ENCODE measurements at regions of chr1 and their contacts with region 1.

Region 1: GRCh38 chr1:19630720-19631395 is 13.3 kb upstream of the NBL1 start:
- DNase-seq: no peak
- ATAC-seq: no peak
- H3K4me3 ChIP-seq: no peak overlapping the region
- H3K27ac ChIP-seq: no peak overlapping the region
- H3K4me1 ChIP-seq: no peaks in the 10 kb centered on the region
- H3K27me3 ChIP-seq: no peaks in the 10 kb centered on the region
- CTCF ChIP-seq: no peak
- POLR2A ChIP-seq: no peak
- RAD21 ChIP-seq: no peak

Region 2: GRCh38 chr1:19110257-19110927 is 520.5 kb before region 1 on chr1:
- CTCF ChIA-PET with region 1: no interaction called
- POLR2A ChIA-PET with region 1: no interaction called
- dilution Hi-C with region 1: no loop called
- in situ Hi-C with region 1: no loop called
- intact Hi-C with region 1: no loop called
- DNase-seq: no peak
- ATAC-seq: no peak
- H3K4me3 ChIP-seq: no peak overlapping the region
- H3K27ac ChIP-seq: no peak overlapping the region
- H3K4me1 ChIP-seq: no peaks in the 10 kb centered on the region
- H3K27me3 ChIP-seq: no peaks in the 10 kb centered on the region
- CTCF ChIP-seq: no peak
- POLR2A ChIP-seq: no peak
- RAD21 ChIP-seq: no peak

Region 3: GRCh38 chr1:19495799-19496624 is 134.8 kb before region 1 on chr1:
- CTCF ChIA-PET with region 1: no interaction called
- POLR2A ChIA-PET with region 1: interaction called, 11 read pairs
- dilution Hi-C with region 1: no loop called
- in situ Hi-C with region 1: no loop called
- intact Hi-C with region 1: no loop called
- DNase-seq: peak; percentile 66
- ATAC-seq: peak; percentile 96
- H3K4me3 ChIP-seq: no peak overlapping the region
- H3K27ac ChIP-seq: peak overlapping the region; percentile 80; the same call in 1 of the 2 replicates
- H3K4me1 ChIP-seq: peaks cover 7% of the 10 kb centered on the region
- H3K27me3 ChIP-seq: no peaks in the 10 kb centered on the region; the same call in 1 of the 2 replicates
- CTCF ChIP-seq: no peak
- POLR2A ChIP-seq: no peak
- RAD21 ChIP-seq: no peak

Region 4: GRCh38 chr1:19861034-19861433 is 230.2 kb after region 1 on chr1:
- CTCF ChIA-PET with region 1: no interaction called
- POLR2A ChIA-PET with region 1: no interaction called
- dilution Hi-C with region 1: no loop called
- in situ Hi-C with region 1: no loop called
- intact Hi-C with region 1: no loop called
- DNase-seq: peak; percentile 19
- ATAC-seq: no peak
- H3K4me3 ChIP-seq: no peak overlapping the region
- H3K27ac ChIP-seq: no peak overlapping the region
- H3K4me1 ChIP-seq: peaks cover 6% of the 10 kb centered on the region; the same call in 1 of the 2 replicates
- H3K27me3 ChIP-seq: peaks cover 3% of the 10 kb centered on the region
- CTCF ChIP-seq: no peak
- POLR2A ChIP-seq: no peak
- RAD21 ChIP-seq: no peak